Heart right ventricle (tissue), 16 donors: ENCODE measurements at regions of chr17 and their contacts with region 1.

Region 1: DNA sequence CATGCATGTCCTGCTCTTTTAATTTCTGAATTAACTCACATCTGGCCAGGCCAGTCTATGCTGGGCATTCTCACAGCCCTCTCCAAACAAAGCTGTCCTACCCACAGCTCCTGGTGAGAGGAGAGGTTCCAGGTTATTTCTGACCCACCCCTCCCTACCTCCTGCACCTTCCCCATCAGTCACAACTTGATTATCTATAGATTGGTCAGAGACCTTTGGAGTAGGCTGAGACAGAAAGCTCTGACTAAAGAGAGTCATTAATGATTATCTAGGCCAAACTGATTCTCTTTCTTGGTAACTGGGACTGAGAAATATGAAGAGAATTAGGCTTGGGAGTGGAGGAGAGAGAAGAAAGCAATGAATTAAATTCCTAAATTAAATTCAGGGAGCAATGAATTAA is 1.4 kb upstream of the KRT222 start:
- DNase-seq: no peak
- ATAC-seq: no peak
- H3K4me3 ChIP-seq: no peak overlapping the region
- H3K27ac ChIP-seq: no peak overlapping the region
- H3K4me1 ChIP-seq: peaks cover 0 to 4% (median 0%) of the 10 kb centered on the region in 9 donors
- H3K27me3 ChIP-seq: peaks cover 0 to 73% (median 27%) of the 10 kb centered on the region in 7 donors
- CTCF ChIP-seq: no peak

Region 2: GRCh38 chr17:40588552-40588951 is 77.8 kb before region 1 on chr17:
- intact Hi-C with region 1: loop called in 1 of 10 experiments (anchors 2 kb)
- DNase-seq: no peak
- ATAC-seq: no peak
- H3K4me3 ChIP-seq: no peak overlapping the region
- H3K27ac ChIP-seq: peak overlapping the region in 2 of 10 donors; percentile 46 to 59
- H3K4me1 ChIP-seq: peaks cover 0 to 19% (median under 1%) of the 10 kb centered on the region in 9 donors
- H3K27me3 ChIP-seq: peaks cover 0 to 4% (median 0%) of the 10 kb centered on the region in 7 donors
- CTCF ChIP-seq: no peak

Region 3: GRCh38 chr17:40750391-40750790 is 84.1 kb after region 1 on chr17:
- intact Hi-C with region 1: no loop called
- DNase-seq: no peak
- ATAC-seq: no peak
- H3K4me3 ChIP-seq: no peak overlapping the region
- H3K27ac ChIP-seq: no peak overlapping the region
- H3K4me1 ChIP-seq: no peaks in the 10 kb centered on the region
- H3K27me3 ChIP-seq: peaks cover 0 to 50% (median 10%) of the 10 kb centered on the region in 7 donors
- CTCF ChIP-seq: no peak